AG04449 (cell line): ENCODE measurements at regions of chr7 and their contacts with region 1.

Region 1: DNA sequence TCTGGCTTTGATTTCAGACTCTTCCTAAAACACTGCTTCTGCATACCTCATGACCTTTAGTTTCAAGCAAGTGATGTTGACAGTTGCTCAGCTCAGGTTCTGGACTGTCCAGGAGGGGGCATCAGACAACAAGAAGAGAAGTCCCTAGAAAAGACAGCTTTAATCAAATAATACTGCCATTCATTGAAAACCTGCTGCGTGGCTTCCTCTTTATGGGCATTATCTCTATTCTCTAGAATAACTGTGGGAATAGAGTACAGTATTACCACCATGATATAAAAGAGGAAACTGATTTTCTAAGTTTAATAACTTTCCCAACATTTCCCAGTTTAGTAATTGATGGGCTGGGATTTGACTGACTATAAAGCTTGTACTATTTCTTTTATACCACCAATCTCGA is 170.4 kb downstream of the SNX13 start:
- DNase-seq: no peak
- H3K4me3 ChIP-seq: no peak overlapping the region
- CTCF ChIP-seq: peak; percentile 73

Region 2: GRCh38 chr7:17680943-17681351 is 89.0 kb before region 1 on chr7:
- CTCF ChIA-PET with region 1: interaction called, 11 read pairs
- POLR2A ChIA-PET with region 1: no interaction called
- DNase-seq: no peak
- H3K4me3 ChIP-seq: no peak overlapping the region
- CTCF ChIP-seq: no peak

Region 3: DNA sequence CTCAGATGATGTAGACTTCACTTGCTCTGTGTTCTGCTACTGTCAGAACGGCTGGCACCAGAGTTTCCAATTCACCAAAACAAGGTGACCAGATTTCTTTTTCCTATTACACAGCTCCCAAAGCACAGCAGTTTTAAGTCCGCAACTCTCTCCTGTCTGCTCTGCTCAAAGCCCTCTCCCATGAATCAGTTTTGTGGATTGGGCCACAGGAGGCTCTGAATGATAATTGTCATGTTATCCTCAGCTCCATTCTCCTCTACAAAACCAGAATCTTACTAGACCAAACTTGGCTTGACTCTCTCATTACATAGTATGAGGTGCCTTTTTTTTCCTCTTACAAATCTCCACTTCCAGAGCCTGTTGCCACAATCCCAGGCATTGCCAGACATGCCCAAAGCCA is 53.1 kb before region 1 on chr7:
- CTCF ChIA-PET with region 1: no interaction called
- POLR2A ChIA-PET with region 1: no interaction called
- DNase-seq: no peak
- H3K4me3 ChIP-seq: no peak overlapping the region
- CTCF ChIP-seq: no peak

Region 4: GRCh38 chr7:17746020-17746530 is 23.8 kb before region 1 on chr7:
- CTCF ChIA-PET with region 1: interaction called, 12 read pairs
- POLR2A ChIA-PET with region 1: no interaction called
- DNase-seq: no peak
- H3K4me3 ChIP-seq: no peak overlapping the region
- CTCF ChIP-seq: no peak

Region 5: GRCh38 chr7:17758008-17758407 is 11.9 kb before region 1 on chr7:
- CTCF ChIA-PET with region 1: interaction called, 19 read pairs
- POLR2A ChIA-PET with region 1: no interaction called
- DNase-seq: no peak
- H3K4me3 ChIP-seq: no peak overlapping the region
- CTCF ChIP-seq: no peak

Region 6: GRCh38 chr7:17946591-17946990 is 176.7 kb after region 1 on chr7:
- CTCF ChIA-PET with region 1: interaction called, 13 read pairs
- POLR2A ChIA-PET with region 1: no interaction called
- DNase-seq: no peak
- H3K4me3 ChIP-seq: no peak overlapping the region
- CTCF ChIP-seq: no peak

Region 7: DNA sequence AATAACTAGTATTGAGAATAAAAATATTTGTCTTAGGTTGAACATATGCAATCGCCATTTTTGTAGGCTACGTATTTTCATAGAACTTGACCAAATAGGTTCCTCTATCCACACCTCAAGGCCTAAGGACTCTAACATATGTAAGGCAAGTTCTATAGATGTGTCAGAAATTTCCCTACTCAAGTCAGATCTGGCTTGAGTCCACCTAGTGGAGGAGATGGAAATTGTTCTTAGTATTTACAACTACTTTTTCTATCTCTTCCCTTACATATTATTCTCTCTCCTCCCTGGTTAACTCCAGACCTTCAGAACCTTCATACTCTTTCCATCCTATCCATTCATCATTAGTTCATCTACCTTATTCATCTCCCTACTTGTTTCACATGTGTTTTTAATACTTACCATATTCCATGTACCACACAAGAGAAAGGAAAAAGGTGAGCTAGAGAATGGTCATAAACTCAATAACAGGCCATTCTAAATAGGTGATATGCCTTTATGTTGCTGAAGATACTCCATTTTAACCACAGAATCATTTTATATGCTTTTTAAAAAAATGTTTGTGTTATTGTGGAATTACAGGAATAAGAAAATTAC is 551.2 kb after region 1 on chr7:
- CTCF ChIA-PET with region 1: interaction called, 84 read pairs
- POLR2A ChIA-PET with region 1: no interaction called
- DNase-seq: peak; percentile 16
- H3K4me3 ChIP-seq: no peak overlapping the region
- CTCF ChIP-seq: peak; percentile 54

Region 8: DNA sequence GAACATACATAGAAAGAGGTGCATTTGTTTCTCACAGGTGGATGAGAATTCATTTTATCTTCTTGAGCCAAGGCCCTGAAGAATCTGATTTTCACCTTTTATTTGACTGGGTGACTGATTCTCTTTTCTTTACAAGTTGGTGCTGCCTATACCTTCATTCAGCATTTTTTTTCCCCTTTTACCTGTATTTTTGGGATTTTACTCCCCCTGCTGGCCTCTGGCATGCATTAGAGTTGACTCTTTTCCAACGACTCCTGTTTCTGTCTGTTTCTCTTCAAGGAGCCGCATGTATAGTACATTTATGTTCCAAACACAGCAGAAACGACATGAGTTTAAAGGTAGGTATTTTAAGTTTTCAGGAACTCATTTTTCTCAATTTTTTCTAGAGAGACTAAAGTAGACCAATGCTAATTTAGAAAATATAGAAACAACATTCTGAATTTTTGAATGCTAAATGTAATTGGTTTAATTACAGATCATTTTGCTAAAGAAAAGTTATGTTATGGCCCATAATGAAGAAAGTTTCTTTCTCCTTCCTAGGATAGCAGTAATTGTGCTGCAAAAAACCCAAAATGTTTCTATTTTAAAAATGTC is 575.8 kb after region 1 on chr7:
- CTCF ChIA-PET with region 1: interaction called, 67 read pairs
- POLR2A ChIA-PET with region 1: no interaction called
- DNase-seq: no peak
- H3K4me3 ChIP-seq: no peak overlapping the region
- CTCF ChIP-seq: peak; percentile 54